ENCODE measurements at regions of chr7 and their contacts with region 1.

Region 1: DNA sequence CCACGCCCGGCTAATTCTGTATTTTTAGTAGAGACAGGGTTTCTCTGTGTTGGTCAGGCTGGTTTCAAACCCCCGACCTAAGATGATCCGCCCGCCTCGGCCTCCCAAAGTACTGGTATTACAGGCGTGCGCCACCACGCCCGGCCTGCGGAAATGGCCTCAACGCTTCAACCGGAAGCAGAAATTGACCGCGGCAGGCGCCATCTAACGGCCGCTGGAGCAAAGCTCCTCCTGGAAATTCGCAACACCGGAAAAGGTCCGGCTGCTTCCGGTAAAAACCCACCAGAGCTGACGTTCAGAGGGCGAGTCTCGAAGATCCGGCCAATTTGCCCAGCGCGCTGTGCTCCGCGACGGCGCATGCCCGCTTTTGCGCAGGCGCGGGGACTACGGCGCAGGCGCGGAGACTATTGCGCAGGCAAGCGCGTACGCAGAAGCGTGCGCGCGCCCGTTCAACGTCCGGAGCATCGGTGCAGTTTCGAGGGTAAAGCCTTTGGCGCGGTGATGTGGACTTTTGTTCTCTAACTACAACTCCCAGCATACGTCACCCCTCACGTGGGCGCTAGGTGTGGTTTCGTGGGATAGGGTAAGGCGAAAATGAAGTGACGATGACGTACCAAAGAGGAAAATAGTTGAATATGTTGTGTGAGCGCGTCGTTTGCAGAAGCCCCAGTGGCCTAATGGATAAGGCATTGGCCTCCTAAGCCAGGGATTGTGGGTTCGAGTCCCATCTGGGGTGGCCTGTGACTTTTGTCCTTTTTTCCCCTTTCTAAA is 915 bp upstream of the FMC1 start:
- DNase-seq: peak; percentile 92
- H3K4me3 ChIP-seq: peak overlapping the region; percentile 81 to 89
- H3K27ac ChIP-seq: peak overlapping the region; percentile 98 to 99
- H3K4me1 ChIP-seq: peaks cover 0 to 6% of the 10 kb centered on the region in 2 experiments; a peak in 2 of 4 replicates
- H3K27me3 ChIP-seq: no peaks in the 10 kb centered on the region
- CTCF ChIP-seq: peak; percentile 94
- EP300 ChIP-seq: peak; percentile 27 to 73; a peak in 1 of 4 replicates
- RAD21 ChIP-seq: peak; percentile 23; the same call in 1 of the 2 replicates

Region 2: GRCh38 chr7:139133335-139134139 is 206.7 kb before region 1 on chr7:
- CTCF ChIA-PET with region 1: interaction called, 7 read pairs
- POLR2A ChIA-PET with region 1: interaction called, 10 read pairs
- DNase-seq: peak; percentile 87
- H3K4me3 ChIP-seq: peak overlapping the region; percentile 76 to 94
- H3K27ac ChIP-seq: peak overlapping the region; percentile 65 to 87
- H3K4me1 ChIP-seq: peaks cover 0 to 7% of the 10 kb centered on the region in 2 experiments; a peak in 2 of 4 replicates
- H3K27me3 ChIP-seq: peaks cover 1% of the 10 kb centered on the region
- CTCF ChIP-seq: no peak
- EP300 ChIP-seq: peak in 1 of 2 experiments; percentile 50; a peak in 2 of 4 replicates
- RAD21 ChIP-seq: peak; percentile 24; the same call in 1 of the 2 replicates

Region 3: DNA sequence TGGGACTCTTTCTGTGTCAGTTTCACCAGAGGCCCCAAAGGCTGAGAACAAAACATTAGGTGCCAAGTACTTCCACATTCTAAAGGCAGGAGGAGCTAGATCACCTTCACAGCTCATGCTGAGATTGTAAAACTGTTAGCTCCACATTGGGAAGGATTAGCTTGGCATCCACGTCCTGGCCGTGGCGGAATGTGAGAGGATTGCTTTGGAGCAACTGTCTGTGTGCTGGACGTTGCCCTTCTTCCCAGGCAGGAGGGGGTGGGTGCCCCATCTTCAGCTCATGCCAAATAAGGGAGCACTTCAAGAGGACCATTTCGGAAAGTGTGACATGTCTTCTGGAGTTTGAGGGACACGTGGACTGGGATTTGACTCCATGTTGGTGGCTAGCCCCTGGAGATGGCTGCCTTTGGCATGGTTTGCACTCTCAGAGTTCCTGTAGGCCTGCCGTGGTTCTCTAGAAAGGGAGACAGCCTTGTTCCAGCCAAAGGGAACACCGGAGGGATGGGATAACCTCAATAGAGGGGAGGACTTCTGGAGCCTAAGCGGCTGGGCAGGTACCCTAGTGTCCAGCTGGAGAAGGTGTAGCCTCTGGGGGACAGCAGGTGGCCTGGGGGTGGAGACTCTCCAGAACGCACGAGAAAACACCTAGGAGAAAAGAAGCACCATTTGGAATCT is 19.0 kb before region 1 on chr7:
- CTCF ChIA-PET with region 1: interaction called, 11 read pairs
- POLR2A ChIA-PET with region 1: interaction called, 5 read pairs
- DNase-seq: no peak
- H3K4me3 ChIP-seq: no peak overlapping the region
- H3K27ac ChIP-seq: no peak overlapping the region
- H3K4me1 ChIP-seq: no peaks in the 10 kb centered on the region
- H3K27me3 ChIP-seq: no peaks in the 10 kb centered on the region
- CTCF ChIP-seq: peak; percentile 56
- EP300 ChIP-seq: no peak
- RAD21 ChIP-seq: peak; percentile 49

Region 4: DNA sequence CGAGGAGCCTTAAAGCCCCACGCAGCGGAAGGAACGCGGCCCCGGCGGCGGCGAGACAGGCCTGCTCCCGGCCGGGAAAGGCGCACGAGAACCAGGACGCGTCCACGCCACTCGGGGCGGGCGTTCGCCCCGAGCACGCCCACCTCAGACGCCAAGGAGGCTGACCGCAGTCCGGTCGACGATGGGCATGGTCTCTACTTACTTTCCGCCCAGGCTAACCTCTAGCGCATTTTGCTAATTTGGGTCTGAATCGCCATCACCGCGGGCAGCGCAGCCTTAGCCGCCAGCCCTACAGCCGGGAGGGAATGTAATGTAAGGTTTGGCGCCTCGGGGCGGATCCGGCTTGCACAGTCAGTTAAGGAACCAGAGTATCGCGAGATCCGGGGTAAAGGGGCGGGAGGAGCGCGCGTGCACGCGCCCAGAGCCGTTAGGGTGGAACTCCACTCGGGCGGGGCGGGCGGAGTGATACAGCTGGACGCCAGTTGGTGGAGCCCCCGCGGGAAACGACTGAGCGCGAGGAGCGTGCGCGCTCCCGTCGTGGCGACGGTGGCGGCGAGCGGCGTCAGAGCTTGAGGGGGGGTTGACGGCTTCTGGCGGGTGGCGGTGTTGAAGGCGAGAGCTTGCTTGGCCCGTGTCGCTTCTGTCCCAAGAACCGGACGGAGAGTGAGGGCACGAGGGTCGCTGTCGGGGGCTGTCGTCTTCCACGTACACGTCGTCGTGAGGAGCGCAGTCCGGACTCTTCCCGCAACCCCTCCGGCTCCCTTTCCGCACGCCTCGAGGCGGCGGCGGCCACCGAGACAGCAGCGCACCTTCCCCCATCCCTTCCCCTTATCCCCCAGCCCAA is 19.4 kb after region 1 on chr7 and contains the start of gene LUC7L2:
- CTCF ChIA-PET with region 1: interaction called, 5 read pairs
- POLR2A ChIA-PET with region 1: interaction called, 23 read pairs
- DNase-seq: peak; percentile 98
- H3K4me3 ChIP-seq: peak within 1 kb of the TSS; percentile 85 to 90
- H3K27ac ChIP-seq: peak within 1 kb of the TSS; percentile 98 to 100
- H3K4me1 ChIP-seq: peaks cover 10 to 20% of the 10 kb centered on the region in 2 experiments; a peak in 3 of 4 replicates
- H3K27me3 ChIP-seq: no peaks in the 10 kb centered on the region
- CTCF ChIP-seq: peak; percentile 17; the same call in 1 of the 2 replicates
- EP300 ChIP-seq: 0 out of 4 replicates have a peak, but pooled peaks of 1 of the 2 experiments have one; percentile 7
- RAD21 ChIP-seq: no peak
- polyA plus RNA-seq, gene LUC7L2: 45.7 and 50.7 TPM in 2 replicates